BJ (cell line): ENCODE measurements at regions of chr7 and their contacts with region 1.

Region 1: DNA sequence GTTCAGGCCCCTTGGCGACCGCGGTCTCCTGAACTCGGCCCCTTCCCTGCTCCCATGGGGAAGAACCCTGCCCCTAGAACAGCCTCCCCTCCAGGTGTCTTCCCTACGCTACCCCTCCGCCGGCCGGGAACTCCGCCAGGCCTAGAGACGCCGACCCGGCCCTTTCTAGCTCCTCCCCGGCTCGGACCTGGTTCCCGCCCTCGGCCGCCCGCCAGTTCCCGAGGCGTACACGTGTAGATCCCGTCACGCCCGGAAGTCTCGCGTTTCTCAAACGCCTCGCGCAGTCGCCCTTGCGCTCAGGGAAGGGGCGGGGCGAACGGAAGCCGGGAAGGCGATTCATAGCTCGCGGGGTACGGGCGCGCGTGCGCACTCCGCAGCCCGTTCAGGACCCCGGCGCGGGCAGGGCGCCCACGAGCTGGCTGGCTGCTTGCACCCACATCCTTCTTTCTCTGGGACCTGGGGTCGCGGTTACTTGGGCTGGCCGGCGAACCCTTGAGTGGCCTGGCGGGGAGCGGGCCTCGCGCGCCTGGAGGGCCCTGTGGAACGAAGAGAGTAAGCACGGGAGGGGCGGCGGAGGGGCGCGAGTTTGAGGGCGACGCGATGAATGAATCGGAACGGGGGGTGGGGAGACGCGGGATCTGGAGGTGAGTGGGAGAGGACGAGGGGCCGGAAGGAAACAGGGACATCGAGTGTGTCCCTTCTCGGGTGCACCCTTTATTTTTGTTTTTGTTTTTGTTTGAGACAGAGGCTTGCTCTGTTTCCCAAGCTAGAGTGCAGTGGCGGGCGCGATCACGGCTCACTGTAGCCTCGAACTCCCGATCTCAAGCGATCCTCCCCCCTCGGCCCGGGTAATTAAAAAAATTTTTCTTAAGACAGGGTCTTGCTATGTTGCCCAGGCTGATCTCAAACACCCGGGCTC is at the start of gene POP7:
- DNase-seq: peak; percentile 71
- H3K4me3 ChIP-seq: peak within 1 kb of the TSS; percentile 97
- H3K27me3 ChIP-seq: no peaks in the 10 kb centered on the region
- CTCF ChIP-seq: no peak
- polyA plus RNA-seq, gene POP7: 24.5 and 35.2 TPM in 2 replicates

Region 2: DNA sequence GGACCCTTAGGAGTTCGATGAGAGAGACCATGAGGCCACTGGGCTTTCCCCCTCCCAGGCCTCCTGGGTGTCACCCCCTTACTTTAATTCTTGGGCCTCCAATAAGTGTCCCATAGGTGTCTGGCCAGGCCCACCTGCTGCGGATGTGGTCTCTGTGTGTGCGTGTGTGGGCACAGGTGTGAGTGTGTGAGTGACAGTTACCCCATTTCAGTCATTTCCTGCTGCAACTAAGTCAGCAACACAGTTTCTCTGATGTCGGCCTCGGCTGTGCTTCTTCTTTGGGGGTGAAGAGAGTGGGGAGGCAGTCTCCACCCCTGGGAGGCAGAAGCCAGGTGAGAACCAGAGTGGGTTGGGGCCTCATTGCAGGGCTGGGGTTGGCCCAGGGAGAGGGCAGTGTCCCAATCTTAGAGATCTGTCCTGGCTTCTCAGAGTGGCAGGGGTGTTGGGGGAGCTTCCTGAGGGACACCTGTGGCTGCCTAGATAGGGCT is 484.7 kb before region 1 on chr7:
- CTCF ChIA-PET with region 1: no interaction called
- POLR2A ChIA-PET with region 1: no interaction called
- DNase-seq: no peak
- H3K4me3 ChIP-seq: no peak overlapping the region
- H3K27me3 ChIP-seq: no peaks in the 10 kb centered on the region
- CTCF ChIP-seq: no peak

Region 3: GRCh38 chr7:100567031-100567730 is 138.8 kb before region 1 on chr7:
- CTCF ChIA-PET with region 1: no interaction called
- POLR2A ChIA-PET with region 1: no interaction called
- DNase-seq: no peak
- H3K4me3 ChIP-seq: no peak overlapping the region
- H3K27me3 ChIP-seq: no peaks in the 10 kb centered on the region
- CTCF ChIP-seq: no peak

Region 4: GRCh38 chr7:100719523-100720319 is 13.7 kb after region 1 on chr7:
- CTCF ChIA-PET with region 1: interaction called, 27 read pairs
- POLR2A ChIA-PET with region 1: no interaction called
- DNase-seq: no peak
- H3K4me3 ChIP-seq: no peak overlapping the region
- H3K27me3 ChIP-seq: peaks cover 38% of the 10 kb centered on the region
- CTCF ChIP-seq: peak; percentile 60

Region 5: GRCh38 chr7:100726996-100727761 is 21.2 kb after region 1 on chr7:
- CTCF ChIA-PET with region 1: interaction called, 27 read pairs
- POLR2A ChIA-PET with region 1: no interaction called
- DNase-seq: peak; percentile 92
- H3K4me3 ChIP-seq: no peak overlapping the region
- H3K27me3 ChIP-seq: peaks cover 27% of the 10 kb centered on the region
- CTCF ChIP-seq: no peak

Region 6: DNA sequence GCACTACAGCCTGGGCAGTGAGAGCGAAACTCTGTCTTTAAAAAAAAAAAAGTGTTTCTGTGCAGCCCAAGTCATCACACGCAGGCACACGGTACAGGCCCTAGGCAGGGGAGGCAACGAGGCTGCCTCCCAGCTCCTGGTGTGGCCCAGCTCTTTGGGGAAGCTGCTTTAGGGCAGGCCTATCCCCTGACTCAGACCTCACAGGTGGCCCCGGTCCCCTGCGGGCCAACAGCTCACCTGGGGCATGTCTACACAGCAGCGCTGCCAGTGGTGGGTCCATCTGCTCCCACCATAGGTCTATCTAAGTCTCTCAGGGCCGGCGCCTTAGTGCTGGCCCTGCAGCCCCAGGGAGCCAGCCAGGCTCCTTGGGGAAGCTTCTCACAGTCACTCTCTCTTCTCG is 58.8 kb after region 1 on chr7:
- CTCF ChIA-PET with region 1: interaction called, 11 read pairs
- POLR2A ChIA-PET with region 1: no interaction called
- DNase-seq: no peak
- H3K4me3 ChIP-seq: no peak overlapping the region
- H3K27me3 ChIP-seq: peaks cover 15% of the 10 kb centered on the region
- CTCF ChIP-seq: no peak

Region 7: DNA sequence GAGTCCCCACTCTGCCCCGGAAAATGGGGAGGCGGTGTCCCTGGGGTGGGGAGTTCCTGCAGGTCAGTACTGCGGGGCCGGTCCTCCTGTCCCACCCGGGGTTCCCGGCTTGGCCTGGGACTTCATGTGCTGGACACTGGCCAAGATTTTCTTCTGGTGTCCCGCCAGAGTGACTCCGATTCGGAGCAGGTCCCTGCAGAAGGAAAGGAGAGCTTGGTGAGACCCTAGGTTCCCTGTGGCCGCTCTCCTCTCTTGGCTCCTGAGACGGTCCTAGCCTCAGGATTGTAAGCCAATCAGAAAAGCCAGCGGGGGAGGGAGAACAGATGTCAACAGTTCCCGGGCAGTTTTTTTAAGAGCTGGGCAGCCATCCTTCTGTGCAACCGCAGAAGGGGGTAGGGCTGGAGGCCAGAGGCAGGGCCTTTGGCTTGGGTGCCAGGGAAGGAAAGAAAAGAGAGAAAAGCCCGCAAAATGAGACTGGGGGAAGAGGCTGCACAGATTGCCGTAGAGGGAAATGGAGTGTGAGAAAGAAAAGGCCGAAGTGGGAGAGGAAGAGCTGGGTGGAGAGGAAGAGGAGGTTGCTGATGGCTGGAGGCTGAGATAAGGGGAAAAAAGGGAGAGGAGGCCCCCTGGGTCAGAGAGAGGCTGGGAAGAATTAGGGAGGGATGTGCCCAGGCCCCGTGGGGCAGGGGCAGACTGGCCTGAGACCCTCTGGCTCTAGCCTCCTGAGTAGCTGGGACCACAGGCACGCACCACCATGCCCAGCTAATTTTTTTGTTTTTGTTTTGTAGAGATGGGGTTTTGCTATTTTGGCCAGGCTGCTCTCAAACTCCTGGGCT is 97.6 kb after region 1 on chr7:
- CTCF ChIA-PET with region 1: interaction called, 17 read pairs
- POLR2A ChIA-PET with region 1: no interaction called
- DNase-seq: peak; percentile 39
- H3K4me3 ChIP-seq: no peak overlapping the region
- H3K27me3 ChIP-seq: no peaks in the 10 kb centered on the region
- CTCF ChIP-seq: no peak

Region 8: DNA sequence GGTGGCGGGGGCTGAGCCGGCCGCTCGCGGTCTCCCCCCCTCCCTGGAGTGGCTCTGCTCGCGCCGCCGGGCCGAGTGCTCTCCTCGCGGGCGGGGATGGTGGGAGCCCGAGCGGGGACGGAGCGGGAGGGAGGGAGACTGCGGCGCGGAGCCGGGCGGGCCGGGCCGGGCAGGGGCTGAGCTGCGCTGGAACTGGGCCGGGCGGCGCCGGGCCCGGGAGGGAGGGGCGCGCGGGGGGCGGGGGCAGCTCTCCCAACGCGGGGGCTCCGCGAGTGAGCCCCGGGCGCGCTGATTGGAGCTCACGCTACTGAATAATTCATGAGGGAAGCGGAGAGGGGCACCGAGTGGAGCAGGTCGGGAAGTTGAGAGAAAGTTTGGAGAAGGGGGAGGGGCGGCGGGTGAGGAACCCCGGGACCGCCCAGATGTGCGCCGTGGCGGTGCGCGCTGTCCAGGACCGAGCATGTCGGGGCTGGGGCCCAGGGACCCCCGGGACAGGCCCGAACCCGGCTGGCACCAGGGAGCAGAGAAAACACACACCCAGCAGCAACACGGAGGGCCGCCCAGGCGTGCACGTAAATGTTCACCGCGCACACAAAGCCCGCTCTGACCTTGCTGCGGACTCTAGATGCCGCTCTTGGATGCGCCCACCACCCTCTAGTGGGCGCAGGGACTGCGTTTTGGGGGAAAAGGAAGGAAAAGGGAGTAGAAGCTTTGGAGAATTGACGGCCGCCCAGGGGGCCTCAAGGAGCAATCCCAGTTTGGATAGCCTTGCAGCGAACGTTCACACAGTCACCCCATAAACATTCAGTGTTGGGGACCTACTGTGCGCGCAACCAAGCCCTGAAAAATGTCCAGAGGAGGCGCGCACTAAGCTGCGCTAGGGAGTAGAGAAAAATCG is 121.6 kb after region 1 on chr7 and contains the start of gene EPHB4:
- CTCF ChIA-PET with region 1: interaction called, 17 read pairs
- POLR2A ChIA-PET with region 1: interaction called, 5 read pairs
- DNase-seq: peak; percentile 32
- H3K4me3 ChIP-seq: peak within 1 kb of the TSS; percentile 74
- H3K27me3 ChIP-seq: no peaks in the 10 kb centered on the region
- CTCF ChIP-seq: peak; percentile 67
- polyA plus RNA-seq, gene EPHB4: 23.8 and 30.5 TPM in 2 replicates